ENCODE measurements at regions of chr17 and their contacts with region 1.

Region 1: GRCh38 chr17:52106638-52107261 is 51.8 kb downstream of the CA10 start:
- DNase-seq: peak; percentile 67
- ATAC-seq: no peak
- H3K4me3 Mint-ChIP-seq: no peak overlapping the region
- H3K27ac Mint-ChIP-seq: no peak overlapping the region
- H3K4me1 Mint-ChIP-seq: no peaks in the 10 kb centered on the region
- H3K27me3 Mint-ChIP-seq: peaks cover 11% of the 10 kb centered on the region

Region 2: DNA sequence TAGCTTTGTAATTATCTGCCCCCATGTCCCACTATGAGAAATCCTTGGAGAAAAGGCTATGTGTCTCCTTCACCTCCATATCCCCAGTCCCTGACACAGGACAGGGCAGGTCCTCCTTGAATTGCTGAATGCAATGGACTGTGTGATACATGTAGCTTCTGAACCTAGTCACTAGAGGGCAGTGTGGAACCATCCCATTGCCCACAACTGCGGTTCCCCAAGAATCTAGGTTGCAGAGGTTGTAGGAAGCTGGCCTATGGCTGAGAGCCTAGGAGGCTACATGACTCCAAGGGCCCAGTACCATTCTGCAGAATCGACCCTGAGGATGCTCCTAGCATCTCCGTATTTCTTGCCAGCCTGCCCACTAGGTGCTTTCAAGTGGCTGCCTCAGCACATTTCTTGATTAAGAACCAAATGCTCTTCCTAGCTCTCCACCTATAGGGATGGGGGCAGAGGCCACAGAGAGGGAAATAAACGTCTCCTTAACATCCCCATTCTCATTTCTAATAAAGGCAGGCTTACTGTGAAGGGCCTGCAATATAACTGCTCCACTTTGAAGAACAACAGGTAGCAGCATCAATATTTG is 342.3 kb before region 1 on chr17:
- CTCF ChIA-PET with region 1: interaction called, 16 read pairs
- POLR2A ChIA-PET with region 1: no interaction called
- intact Hi-C with region 1: loop called (anchors 1 kb)
- DNase-seq: peak; percentile 66
- ATAC-seq: peak; percentile 89
- H3K4me3 Mint-ChIP-seq: no peak overlapping the region
- H3K27ac Mint-ChIP-seq: no peak overlapping the region
- H3K4me1 Mint-ChIP-seq: no peaks in the 10 kb centered on the region
- H3K27me3 Mint-ChIP-seq: peaks cover 19% of the 10 kb centered on the region

Region 3: GRCh38 chr17:51860954-51861561 is 245.7 kb before region 1 on chr17:
- CTCF ChIA-PET with region 1: interaction called, 4 read pairs
- POLR2A ChIA-PET with region 1: no interaction called
- intact Hi-C with region 1: loop called in 1 of 2 experiments (anchors 1 kb)
- DNase-seq: peak; percentile 44
- ATAC-seq: no peak
- H3K4me3 Mint-ChIP-seq: no peak overlapping the region
- H3K27ac Mint-ChIP-seq: no peak overlapping the region
- H3K4me1 Mint-ChIP-seq: no peaks in the 10 kb centered on the region
- H3K27me3 Mint-ChIP-seq: peaks cover 4% of the 10 kb centered on the region

Region 4: GRCh38 chr17:51876986-51877385 is 229.8 kb before region 1 on chr17:
- CTCF ChIA-PET with region 1: no interaction called
- POLR2A ChIA-PET with region 1: no interaction called
- intact Hi-C with region 1: no loop called
- DNase-seq: no peak
- ATAC-seq: no peak
- H3K4me3 Mint-ChIP-seq: no peak overlapping the region
- H3K27ac Mint-ChIP-seq: no peak overlapping the region
- H3K4me1 Mint-ChIP-seq: no peaks in the 10 kb centered on the region
- H3K27me3 Mint-ChIP-seq: peaks cover 8% of the 10 kb centered on the region

Measured in activated CD4-positive, alpha-beta T cell treated with anti-CD3 and anti-CD28 coated beads for 36 hours (primary cell).